ENCODE measurements at regions of chr13 and their contacts with region 1.

Region 1: DNA sequence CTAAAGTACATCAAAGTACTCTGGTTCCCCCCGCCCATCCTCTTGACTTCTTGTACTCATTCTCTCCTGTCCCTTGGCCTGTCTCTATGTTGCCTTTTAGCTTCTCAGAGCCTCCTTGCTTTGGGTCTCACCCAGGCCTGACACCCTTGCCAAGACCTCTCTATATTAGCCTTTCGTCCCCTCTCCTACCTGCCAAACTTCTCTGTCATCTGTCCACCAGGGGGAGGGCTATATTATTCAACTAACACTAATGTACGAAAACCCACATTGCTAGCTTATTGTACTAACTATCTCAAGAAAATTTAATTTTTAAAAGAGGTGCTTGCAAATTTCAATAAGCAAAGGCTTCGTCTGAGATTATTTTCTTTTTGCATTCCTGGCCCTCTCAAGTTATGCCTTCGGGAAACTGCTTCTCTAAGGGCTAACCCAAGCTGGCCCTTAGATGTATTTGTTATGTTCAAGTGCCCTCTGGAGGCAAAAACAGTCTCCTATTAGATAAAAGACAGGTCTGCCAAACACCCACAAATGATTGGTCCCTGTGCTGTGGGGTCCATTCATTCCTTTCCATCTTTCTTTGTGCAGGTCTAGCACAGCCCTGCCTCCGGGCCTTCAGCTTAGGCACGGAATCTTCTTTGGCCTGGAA is 6.3 kb upstream of the MRPS31 start:
- DNase-seq: peak in 3 of 5 donors; percentile 59 to 75 (median 65)
- H3K4me3 ChIP-seq: peak overlapping the region; percentile 40 to 52
- H3K4me3 Mint-ChIP-seq: peak overlapping the region; percentile 77 to 92 (median 89)
- H3K27ac ChIP-seq: peak overlapping the region; percentile 72
- H3K27ac Mint-ChIP-seq: peak overlapping the region; percentile 93 to 100 (median 99)
- H3K4me1 ChIP-seq: peaks cover 30% of the 10 kb centered on the region
- H3K4me1 Mint-ChIP-seq: peaks cover 19 to 34% (median 22%) of the 10 kb centered on the region in 4 donors
- H3K27me3 ChIP-seq: no peaks in the 10 kb centered on the region
- H3K27me3 Mint-ChIP-seq: no peaks in the 10 kb centered on the region

Region 2: DNA sequence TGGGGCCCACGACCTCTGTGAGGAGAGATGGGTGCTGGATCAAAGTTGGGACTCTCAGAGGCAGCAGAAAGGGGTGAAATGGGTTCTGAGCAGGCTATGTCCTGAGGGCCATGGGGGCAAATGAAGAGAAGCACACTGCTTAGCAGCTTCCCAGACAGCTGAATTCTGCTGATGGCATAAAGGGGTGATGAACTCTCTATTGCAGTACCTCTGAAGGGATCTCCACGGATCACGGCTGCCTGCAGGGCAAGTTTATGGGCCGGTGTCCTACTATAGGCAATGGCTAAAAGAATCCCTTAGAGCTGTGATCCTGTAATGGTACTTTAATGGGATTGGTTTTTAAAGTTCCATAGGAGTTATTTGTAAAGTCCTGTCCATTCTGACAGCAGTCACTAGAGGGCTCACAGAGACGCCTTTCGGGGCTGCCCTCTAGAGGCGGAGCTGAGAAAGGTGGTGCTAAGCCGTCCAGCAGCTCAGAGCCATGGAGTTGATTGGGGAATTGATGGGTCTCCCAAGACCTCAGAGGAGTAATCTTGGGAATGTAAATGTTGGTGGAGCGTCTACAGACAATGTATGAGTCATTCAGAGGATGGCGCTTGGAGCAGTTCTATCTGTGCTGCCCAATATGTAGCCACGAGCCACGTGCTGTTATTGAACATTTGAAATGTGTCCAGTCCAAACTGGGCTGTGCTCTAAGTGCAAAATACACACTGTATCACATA is 834.6 kb before region 1 on chr13:
- CTCF ChIA-PET with region 1: interaction called, 18 read pairs
- POLR2A ChIA-PET with region 1: no interaction called
- intact Hi-C with region 1: loop called (anchors 1 kb)
- DNase-seq: peak; percentile 55 to 67 (median 63)
- H3K4me3 ChIP-seq: no peak overlapping the region
- H3K4me3 Mint-ChIP-seq: peak overlapping the region in 1 of 8 donors; percentile 20
- H3K27ac ChIP-seq: no peak overlapping the region
- H3K27ac Mint-ChIP-seq: peak overlapping the region in 1 of 7 donors; percentile 43
- H3K4me1 ChIP-seq: no peaks in the 10 kb centered on the region
- H3K4me1 Mint-ChIP-seq: peaks cover 3 to 13% (median 6%) of the 10 kb centered on the region in 4 donors
- H3K27me3 ChIP-seq: no peaks in the 10 kb centered on the region
- H3K27me3 Mint-ChIP-seq: peaks cover 0 to 1% of the 10 kb centered on the region in 2 donors

Region 3: DNA sequence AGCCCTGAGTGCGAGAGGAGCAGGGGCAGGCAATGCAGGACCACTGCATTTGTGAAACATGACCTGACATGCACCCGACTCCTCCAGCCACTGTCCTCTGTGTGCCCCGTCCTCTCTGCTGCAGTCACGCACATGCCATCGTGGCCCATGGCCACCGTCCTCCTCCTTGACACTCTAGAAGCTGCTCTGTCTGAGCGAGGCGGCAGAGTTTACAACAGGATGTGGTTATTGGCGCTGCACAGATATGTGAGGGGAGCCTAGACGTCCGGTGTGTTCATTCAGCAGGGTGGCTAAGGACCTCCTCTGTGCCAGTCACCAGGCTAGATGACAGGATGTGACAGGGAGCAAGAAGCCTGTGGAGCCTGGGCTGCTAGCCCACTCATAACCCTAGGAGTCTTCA is 388.7 kb before region 1 on chr13:
- CTCF ChIA-PET with region 1: no interaction called
- POLR2A ChIA-PET with region 1: no interaction called
- intact Hi-C with region 1: loop called (anchors 2 kb)
- DNase-seq: peak; percentile 83 to 93 (median 88)
- H3K4me3 ChIP-seq: peak overlapping the region in 1 of 2 donors; percentile 85
- H3K4me3 Mint-ChIP-seq: peak overlapping the region; percentile 83 to 92 (median 90)
- H3K27ac ChIP-seq: peak overlapping the region; percentile 95
- H3K27ac Mint-ChIP-seq: peak overlapping the region; percentile 89 to 100 (median 99)
- H3K4me1 ChIP-seq: peaks cover 34% of the 10 kb centered on the region
- H3K4me1 Mint-ChIP-seq: peaks cover 31 to 58% (median 39%) of the 10 kb centered on the region in 4 donors
- H3K27me3 ChIP-seq: no peaks in the 10 kb centered on the region
- H3K27me3 Mint-ChIP-seq: no peaks in the 10 kb centered on the region

Region 4: DNA sequence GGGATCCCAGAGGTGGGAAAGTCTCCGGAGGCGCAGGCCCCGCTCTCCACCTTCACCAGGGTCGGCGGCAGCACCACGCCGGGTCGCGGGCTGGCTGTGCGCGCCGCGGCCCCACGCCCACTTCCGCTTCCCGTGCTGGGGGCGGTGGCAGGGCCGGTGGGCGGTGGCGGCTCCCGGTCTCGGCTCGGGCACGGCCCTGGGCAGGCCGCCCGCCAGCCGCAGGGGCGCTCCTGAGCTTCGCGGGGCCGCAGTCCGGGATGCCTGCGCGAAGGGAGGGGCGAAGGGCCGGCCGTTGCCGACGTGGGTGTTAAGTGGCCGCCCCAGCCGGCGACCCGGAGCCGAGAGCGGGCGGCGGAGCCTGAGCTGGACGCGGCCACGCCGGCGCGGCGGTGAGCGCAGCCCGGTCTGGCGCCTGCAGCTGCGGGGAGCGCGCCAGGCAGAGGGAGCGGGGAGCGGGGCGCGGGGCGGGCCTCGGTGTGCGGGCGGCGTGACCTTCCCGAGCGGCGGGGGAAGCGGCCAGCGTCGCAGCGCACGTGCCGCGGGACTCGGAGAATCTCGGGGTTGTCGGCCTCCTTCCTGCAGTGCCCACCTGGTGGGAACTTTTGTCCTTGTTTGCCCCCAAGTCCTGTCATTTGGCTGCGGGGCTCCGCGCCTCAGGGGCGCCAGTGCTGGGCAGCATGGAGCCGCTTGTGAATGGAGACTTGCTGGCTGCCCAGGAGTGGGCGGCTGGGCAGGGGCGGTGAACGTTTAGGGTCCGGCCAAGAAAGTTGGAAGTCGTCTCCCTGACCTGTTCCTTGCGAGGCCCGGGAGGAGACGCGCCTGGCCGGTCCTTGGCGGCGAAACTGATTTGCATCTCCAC is 12.2 kb after region 1 on chr13 and contains the start of gene SLC25A15:
- CTCF ChIA-PET with region 1: interaction called, 40 read pairs
- POLR2A ChIA-PET with region 1: interaction called, 34 read pairs
- intact Hi-C with region 1: loop called (anchors 1 kb)
- DNase-seq: peak; percentile 62 to 80 (median 72)
- H3K4me3 ChIP-seq: peak within 1 kb of the TSS; percentile 17 to 63
- H3K4me3 Mint-ChIP-seq: peak within 1 kb of the TSS; percentile 81 to 89 (median 83)
- H3K27ac ChIP-seq: peak within 1 kb of the TSS; percentile 56
- H3K27ac Mint-ChIP-seq: peak within 1 kb of the TSS; percentile 64 to 94 (median 85)
- H3K4me1 ChIP-seq: peaks cover 7% of the 10 kb centered on the region
- H3K4me1 Mint-ChIP-seq: peaks cover 12 to 39% (median 24%) of the 10 kb centered on the region in 4 donors
- H3K27me3 ChIP-seq: no peaks in the 10 kb centered on the region
- H3K27me3 Mint-ChIP-seq: no peaks in the 10 kb centered on the region
- total RNA-seq, gene SLC25A15: 7.9 to 8.5 TPM

Region 5: DNA sequence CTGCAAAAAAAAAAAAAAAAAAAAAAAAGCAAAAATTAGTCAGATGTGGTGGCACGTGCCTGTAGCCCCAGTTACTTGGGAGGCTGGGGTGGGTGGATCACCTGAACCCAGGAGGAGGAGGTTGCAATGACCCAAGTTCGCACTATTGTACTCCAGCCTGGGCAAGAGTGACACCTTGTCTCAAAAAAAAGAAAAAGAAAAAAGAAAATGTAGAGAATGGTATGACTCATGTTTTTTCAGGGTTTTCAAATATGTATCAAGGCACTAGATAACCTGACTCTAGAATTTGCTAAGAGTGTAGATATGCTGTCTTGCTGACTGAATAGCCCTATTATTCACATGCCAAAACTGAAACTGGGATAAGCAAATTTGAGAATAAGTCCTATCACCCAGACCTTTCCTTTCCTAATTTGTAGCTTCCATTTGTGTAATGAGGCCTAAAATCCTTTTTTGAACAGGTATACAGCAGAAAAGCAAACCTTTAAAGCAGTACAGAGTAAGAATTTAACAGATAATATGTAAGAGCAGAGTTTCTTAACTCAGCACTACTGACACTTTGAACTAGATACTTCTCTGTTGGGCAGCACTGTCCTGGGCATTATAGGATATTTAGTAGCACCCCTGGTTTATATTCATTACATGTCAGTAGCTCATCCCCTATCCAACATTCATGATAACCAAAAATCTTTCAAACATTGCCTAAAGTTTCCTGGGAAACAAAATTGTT is 133.2 kb after region 1 on chr13:
- CTCF ChIA-PET with region 1: no interaction called
- POLR2A ChIA-PET with region 1: no interaction called
- intact Hi-C with region 1: no loop called
- DNase-seq: no peak
- H3K4me3 ChIP-seq: no peak overlapping the region
- H3K4me3 Mint-ChIP-seq: no peak overlapping the region
- H3K27ac ChIP-seq: no peak overlapping the region
- H3K27ac Mint-ChIP-seq: peak overlapping the region in 1 of 7 donors; percentile 29
- H3K4me1 ChIP-seq: no peaks in the 10 kb centered on the region
- H3K4me1 Mint-ChIP-seq: peaks cover 5 to 12% (median 6%) of the 10 kb centered on the region in 4 donors
- H3K27me3 ChIP-seq: no peaks in the 10 kb centered on the region
- H3K27me3 Mint-ChIP-seq: no peaks in the 10 kb centered on the region

Region 6: GRCh38 chr13:40992678-40993518 is 215.6 kb after region 1 on chr13:
- CTCF ChIA-PET with region 1: interaction called, 7 read pairs
- POLR2A ChIA-PET with region 1: no interaction called
- intact Hi-C with region 1: loop called (anchors 1 kb)
- DNase-seq: no peak
- H3K4me3 ChIP-seq: no peak overlapping the region
- H3K4me3 Mint-ChIP-seq: peak overlapping the region in 6 of 8 donors; percentile 9 to 65 (median 35)
- H3K27ac ChIP-seq: peak overlapping the region; percentile 41
- H3K27ac Mint-ChIP-seq: peak overlapping the region; percentile 65 to 94 (median 85)
- H3K4me1 ChIP-seq: peaks cover 93% of the 10 kb centered on the region
- H3K4me1 Mint-ChIP-seq: peaks cover 54 to 87% (median 69%) of the 10 kb centered on the region in 4 donors
- H3K27me3 ChIP-seq: no peaks in the 10 kb centered on the region
- H3K27me3 Mint-ChIP-seq: no peaks in the 10 kb centered on the region

Region 7: GRCh38 chr13:41132512-41133152 is 355.3 kb after region 1 on chr13 and contains the start of gene KBTBD6:
- CTCF ChIA-PET with region 1: no interaction called
- POLR2A ChIA-PET with region 1: no interaction called
- intact Hi-C with region 1: loop called (anchors 5 kb)
- DNase-seq: peak; percentile 89 to 95 (median 90)
- H3K4me3 ChIP-seq: peak within 1 kb of the TSS; percentile 56
- H3K4me3 Mint-ChIP-seq: peak within 1 kb of the TSS; percentile 95 to 100 (median 99)
- H3K27ac ChIP-seq: peak within 1 kb of the TSS; percentile 63
- H3K27ac Mint-ChIP-seq: peak within 1 kb of the TSS; percentile 91 to 98 (median 98)
- H3K4me1 ChIP-seq: peaks cover 49% of the 10 kb centered on the region
- H3K4me1 Mint-ChIP-seq: peaks cover 39 to 55% (median 46%) of the 10 kb centered on the region in 4 donors
- H3K27me3 ChIP-seq: no peaks in the 10 kb centered on the region
- H3K27me3 Mint-ChIP-seq: no peaks in the 10 kb centered on the region
- total RNA-seq, gene KBTBD6: 9.9 to 10.5 TPM